Heart left ventricle (tissue), 16 donors: ENCODE measurements at regions of chr2 and their contacts with region 1.

Region 1: GRCh38 chr2:240560480-240561326 is 546 bp downstream of the DUSP28 start:
- DNase-seq: peak; percentile 100
- ATAC-seq: peak; percentile 86 to 95 (median 92)
- H3K4me3 ChIP-seq: peak overlapping the region; percentile 43 to 94 (median 90)
- H3K27ac ChIP-seq: peak overlapping the region; percentile 99 to 100 (median 100)
- H3K4me1 ChIP-seq: peaks cover 7 to 81% (median 45%) of the 10 kb centered on the region in 12 donors
- H3K27me3 ChIP-seq: peaks cover 0 to 3% (median 0%) of the 10 kb centered on the region in 9 donors
- CTCF ChIP-seq: peak in 11 of 12 donors; percentile 11 to 52 (median 28)
- POLR2A ChIP-seq: peak; percentile 14 to 77

Region 2: GRCh38 chr2:240021488-240022104 is 539.1 kb before region 1 on chr2:
- intact Hi-C with region 1: loop called in 1 of 10 experiments (anchors 10 kb)
- DNase-seq: peak; percentile 31 to 78 (median 57)
- ATAC-seq: peak in 1 of 4 donors; percentile 24
- H3K4me3 ChIP-seq: no peak overlapping the region
- H3K27ac ChIP-seq: no peak overlapping the region
- H3K4me1 ChIP-seq: peaks cover 0 to 33% (median 15%) of the 10 kb centered on the region in 12 donors
- H3K27me3 ChIP-seq: no peaks in the 10 kb centered on the region
- CTCF ChIP-seq: peak; percentile 54 to 82 (median 71)
- POLR2A ChIP-seq: no peak

Region 3: DNA sequence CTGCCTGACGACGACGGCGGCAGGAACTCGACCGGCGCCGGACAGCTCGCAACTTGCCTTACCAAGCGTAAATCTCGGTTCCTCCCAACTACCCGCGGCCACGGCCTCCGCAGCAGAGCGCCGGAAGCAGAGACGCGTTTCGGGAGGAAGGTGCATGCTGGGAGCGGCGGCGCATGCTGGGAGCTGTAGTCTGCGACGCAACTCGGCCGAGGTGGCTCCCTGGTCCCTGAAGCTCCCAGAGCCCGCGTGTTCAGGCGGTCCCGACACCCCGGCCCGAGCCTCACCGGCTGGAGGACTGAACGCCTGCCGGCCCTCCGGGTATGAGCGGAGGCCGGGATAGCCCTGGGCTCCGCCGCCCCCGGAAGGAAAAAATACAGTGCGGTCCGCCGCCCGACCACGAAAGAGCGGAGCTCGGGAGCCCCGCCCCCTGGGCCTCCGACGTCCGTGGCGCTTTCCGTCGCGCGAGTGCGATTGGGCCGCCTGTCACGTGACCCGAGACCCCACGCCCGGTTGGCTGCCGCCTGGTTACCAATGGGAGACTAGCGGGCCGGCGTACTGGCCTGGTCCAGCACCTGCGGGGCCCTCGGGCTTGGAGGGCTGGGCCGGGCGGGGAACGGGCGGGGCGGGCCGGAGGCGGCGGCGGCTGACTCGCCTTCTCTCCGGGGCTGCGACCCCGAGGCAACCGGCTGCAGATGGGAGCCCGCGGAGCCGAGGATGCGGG is 25.7 kb after region 1 on chr2 and contains the start of gene CAPN10:
- intact Hi-C with region 1: loop called in 3 of 10 experiments (anchors 1 to 2 kb)
- DNase-seq: peak; percentile 99
- ATAC-seq: peak; percentile 94 to 97 (median 96)
- H3K4me3 ChIP-seq: peak within 1 kb of the TSS; percentile 55 to 97 (median 83)
- H3K27ac ChIP-seq: peak within 1 kb of the TSS; percentile 83 to 98 (median 92)
- H3K4me1 ChIP-seq: peaks cover 7 to 65% (median 34%) of the 10 kb centered on the region in 12 donors
- H3K27me3 ChIP-seq: no peaks in the 10 kb centered on the region
- CTCF ChIP-seq: no peak
- POLR2A ChIP-seq: peak in 1 of 2 donors; percentile 57
- total RNA-seq, gene CAPN10: 14.9 to 35.6 (median 21.9) TPM

Region 4: GRCh38 chr2:240640939-240641338 is 80.2 kb after region 1 on chr2:
- intact Hi-C with region 1: no loop called
- DNase-seq: peak in 2 of 5 donors; percentile 18 to 67
- ATAC-seq: peak in 2 of 4 donors; percentile 49 to 61
- H3K4me3 ChIP-seq: no peak overlapping the region
- H3K27ac ChIP-seq: no peak overlapping the region
- H3K4me1 ChIP-seq: no peaks in the 10 kb centered on the region
- H3K27me3 ChIP-seq: peaks cover 0 to 23% (median 3%) of the 10 kb centered on the region in 9 donors
- CTCF ChIP-seq: peak in 10 of 12 donors; percentile 6 to 44 (median 27)
- POLR2A ChIP-seq: no peak

Region 5: DNA sequence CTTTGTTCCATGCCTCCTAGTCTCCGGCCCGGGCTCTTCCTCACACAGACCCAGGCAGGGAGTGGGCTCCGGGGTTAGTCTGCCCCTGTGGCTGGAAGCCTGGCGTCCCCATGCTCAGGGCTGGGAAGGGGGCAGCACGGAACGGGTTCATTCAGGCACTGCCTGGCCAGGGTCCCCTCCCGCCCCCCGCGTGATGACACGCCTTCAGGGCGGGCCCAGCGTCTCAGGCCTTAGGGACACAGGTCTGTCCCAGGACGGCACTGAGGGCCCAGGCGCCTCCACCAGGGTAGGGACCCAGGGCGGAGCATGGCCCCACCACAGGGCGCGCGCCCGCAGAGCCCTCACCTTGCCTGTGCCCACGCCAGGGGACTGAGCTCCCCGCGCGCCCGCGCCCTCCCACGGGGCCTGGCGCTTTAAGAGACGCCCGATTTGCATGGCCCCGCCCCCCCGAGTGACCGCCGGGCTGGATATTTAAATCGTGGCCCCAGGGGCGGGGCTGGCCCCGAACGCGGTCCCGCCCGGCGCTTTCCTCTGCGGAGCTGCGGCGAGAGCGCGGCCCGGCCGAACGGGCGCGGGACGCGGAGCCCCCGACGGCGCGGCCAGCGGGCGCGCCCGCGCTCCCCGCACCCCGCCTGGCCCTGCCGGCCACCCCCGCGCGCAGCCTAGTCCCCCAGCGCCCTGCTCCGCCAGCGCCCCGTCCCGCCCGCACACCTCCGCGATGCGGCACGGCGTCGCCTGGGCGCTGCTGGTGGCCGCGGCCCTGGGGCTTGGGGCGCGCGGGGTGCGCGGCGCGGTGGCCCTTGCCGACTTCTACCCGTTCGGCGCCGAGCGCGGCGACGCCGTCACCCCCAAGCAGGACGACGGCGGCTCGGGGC is 437.7 kb after region 1 on chr2 and contains the start of gene SNED1:
- intact Hi-C with region 1: loop called in 1 of 10 experiments (anchors 10 kb)
- DNase-seq: peak; percentile 91 to 95 (median 91)
- ATAC-seq: peak; percentile 84 to 92 (median 87)
- H3K4me3 ChIP-seq: peak within 1 kb of the TSS; percentile 46 to 94 (median 68)
- H3K27ac ChIP-seq: peak within 1 kb of the TSS; percentile 2 to 90 (median 76)
- H3K4me1 ChIP-seq: peaks cover 0 to 47% (median 27%) of the 10 kb centered on the region in 12 donors
- H3K27me3 ChIP-seq: peaks cover 0 to 4% (median 0%) of the 10 kb centered on the region in 9 donors
- CTCF ChIP-seq: no peak
- POLR2A ChIP-seq: peak in 1 of 2 donors; percentile 61
- total RNA-seq, gene SNED1: 3.1 to 14.7 (median 5.6) TPM

Region 6: GRCh38 chr2:241009601-241010530 is 449.2 kb after region 1 on chr2:
- intact Hi-C with region 1: no loop called
- DNase-seq: no peak
- ATAC-seq: peak; percentile 44 to 64 (median 51)
- H3K4me3 ChIP-seq: peak overlapping the region in 9 of 12 donors; percentile 29 to 44 (median 37)
- H3K27ac ChIP-seq: peak overlapping the region; percentile 28 to 68 (median 55)
- H3K4me1 ChIP-seq: peaks cover 0 to 29% (median 16%) of the 10 kb centered on the region in 12 donors
- H3K27me3 ChIP-seq: no peaks in the 10 kb centered on the region
- CTCF ChIP-seq: no peak
- POLR2A ChIP-seq: no peak